Heart left ventricle (tissue), 16 donors: ENCODE measurements at regions of chr7 and their contacts with region 1.

Region 1: DNA sequence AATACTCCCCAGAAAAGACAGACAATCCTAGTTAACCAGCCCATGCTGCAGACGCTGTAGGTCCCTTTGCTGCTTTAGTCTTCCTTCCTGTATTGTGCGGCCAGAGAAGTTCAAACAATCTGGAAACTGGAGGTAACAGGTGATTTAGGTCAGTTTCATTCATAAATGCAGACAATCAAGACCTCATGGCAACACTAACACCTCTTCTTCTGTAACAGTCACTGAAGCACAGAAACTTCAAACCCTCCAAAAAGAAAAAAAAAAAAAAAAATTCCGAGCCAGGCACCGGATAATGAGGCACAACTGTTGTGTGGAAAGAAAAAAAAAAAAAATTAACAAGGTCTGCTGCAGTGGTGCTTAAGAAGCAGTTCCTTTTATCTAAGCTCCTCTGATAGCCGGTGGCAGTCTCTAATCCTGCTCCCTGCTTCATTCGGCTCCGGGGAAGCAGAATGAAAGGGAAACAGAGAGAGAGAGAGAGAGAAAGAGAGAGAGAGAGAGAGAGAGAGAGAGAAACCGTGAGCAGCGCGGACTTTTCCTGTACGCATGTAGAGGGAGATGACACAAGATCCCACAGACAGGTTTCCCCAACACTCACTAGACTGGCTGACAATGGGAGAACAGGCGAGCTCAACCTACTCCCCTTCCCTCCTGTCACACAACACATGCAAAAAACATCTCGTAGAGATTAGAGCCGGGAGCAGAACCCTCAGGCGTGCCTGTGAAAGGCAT is at the start of gene SEMA3A:
- DNase-seq: peak in 2 of 5 donors; percentile 17 to 32
- ATAC-seq: peak; percentile 58 to 87 (median 76)
- H3K4me3 ChIP-seq: peak within 1 kb of the TSS; percentile 15 to 59 (median 49)
- H3K27ac ChIP-seq: peak within 1 kb of the TSS in 1 of 12 donors; percentile 79
- H3K4me1 ChIP-seq: peaks cover 0 to 16% (median 1%) of the 10 kb centered on the region in 12 donors
- H3K27me3 ChIP-seq: no peaks in the 10 kb centered on the region
- CTCF ChIP-seq: no peak
- POLR2A ChIP-seq: no peak
- total RNA-seq, gene SEMA3A: 0.32 to 6.6 (median 1.5) TPM

Region 2: DNA sequence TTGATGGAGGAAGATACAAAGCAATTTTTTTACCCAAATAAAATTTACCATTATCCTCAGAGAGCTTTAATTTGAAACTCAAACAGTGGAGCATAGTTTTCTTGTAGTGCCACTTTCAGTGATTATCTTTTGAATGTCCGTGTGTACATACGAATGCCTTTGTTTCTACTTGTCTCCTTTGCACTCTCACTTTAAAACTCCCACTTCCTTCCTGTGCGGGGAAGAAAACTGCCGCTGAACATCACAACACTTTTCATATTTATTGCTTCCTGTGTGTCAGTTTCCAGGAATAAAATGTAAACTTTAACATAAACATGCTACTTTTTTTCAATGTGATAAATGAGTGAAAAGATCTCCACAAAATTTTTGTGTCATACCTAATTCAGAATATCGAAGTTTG is 102.5 kb before region 1 on chr7:
- intact Hi-C with region 1: loop called in 1 of 10 experiments (anchors 10 kb)
- DNase-seq: no peak
- ATAC-seq: no peak
- H3K4me3 ChIP-seq: peak overlapping the region in 2 of 12 donors; percentile 3 to 15
- H3K27ac ChIP-seq: no peak overlapping the region
- H3K4me1 ChIP-seq: peaks cover 0 to 7% (median 0%) of the 10 kb centered on the region in 12 donors
- H3K27me3 ChIP-seq: no peaks in the 10 kb centered on the region
- CTCF ChIP-seq: no peak
- POLR2A ChIP-seq: no peak

Region 3: DNA sequence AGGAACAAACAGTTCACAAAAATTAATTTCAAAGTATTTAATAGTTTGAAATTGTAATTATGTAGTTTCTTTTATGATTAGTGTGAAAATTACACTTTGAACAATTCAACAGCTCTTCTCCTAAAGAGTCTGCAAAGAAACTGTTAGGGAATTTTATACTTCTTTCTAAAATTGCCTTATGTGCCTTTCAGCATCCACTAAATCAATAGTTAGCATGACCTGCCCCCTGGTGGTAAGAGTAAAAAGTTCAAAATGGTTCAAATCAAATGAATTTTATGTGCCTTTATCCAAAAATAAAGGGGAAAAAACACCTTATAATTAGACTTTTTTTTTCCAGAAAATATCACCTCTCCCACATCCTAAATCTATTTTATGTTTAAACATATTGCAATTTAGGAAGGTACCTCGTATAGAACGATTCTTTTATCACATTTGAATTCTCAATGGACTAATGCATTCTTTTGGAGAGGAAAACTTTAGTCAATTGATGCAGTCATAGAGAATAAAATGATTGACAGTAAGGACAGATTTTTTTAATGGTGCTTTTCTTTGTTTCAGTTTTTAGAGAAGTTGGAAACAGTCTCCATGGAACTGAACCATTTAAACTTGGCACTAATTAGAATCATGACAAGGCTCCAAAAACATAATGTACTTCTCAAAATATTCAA is 828.5 kb after region 1 on chr7:
- intact Hi-C with region 1: loop called in 3 of 10 experiments (anchors 10 kb)
- DNase-seq: peak in 1 of 5 donors; percentile 20
- ATAC-seq: no peak
- H3K4me3 ChIP-seq: no peak overlapping the region
- H3K27ac ChIP-seq: no peak overlapping the region
- H3K4me1 ChIP-seq: peaks cover 0 to 5% (median 0%) of the 10 kb centered on the region in 12 donors
- H3K27me3 ChIP-seq: no peaks in the 10 kb centered on the region
- CTCF ChIP-seq: peak; percentile 57 to 80 (median 70)
- POLR2A ChIP-seq: no peak